PC-9 (cell line): ENCODE measurements at regions of chr15 and their contacts with region 1.

Region 1: DNA sequence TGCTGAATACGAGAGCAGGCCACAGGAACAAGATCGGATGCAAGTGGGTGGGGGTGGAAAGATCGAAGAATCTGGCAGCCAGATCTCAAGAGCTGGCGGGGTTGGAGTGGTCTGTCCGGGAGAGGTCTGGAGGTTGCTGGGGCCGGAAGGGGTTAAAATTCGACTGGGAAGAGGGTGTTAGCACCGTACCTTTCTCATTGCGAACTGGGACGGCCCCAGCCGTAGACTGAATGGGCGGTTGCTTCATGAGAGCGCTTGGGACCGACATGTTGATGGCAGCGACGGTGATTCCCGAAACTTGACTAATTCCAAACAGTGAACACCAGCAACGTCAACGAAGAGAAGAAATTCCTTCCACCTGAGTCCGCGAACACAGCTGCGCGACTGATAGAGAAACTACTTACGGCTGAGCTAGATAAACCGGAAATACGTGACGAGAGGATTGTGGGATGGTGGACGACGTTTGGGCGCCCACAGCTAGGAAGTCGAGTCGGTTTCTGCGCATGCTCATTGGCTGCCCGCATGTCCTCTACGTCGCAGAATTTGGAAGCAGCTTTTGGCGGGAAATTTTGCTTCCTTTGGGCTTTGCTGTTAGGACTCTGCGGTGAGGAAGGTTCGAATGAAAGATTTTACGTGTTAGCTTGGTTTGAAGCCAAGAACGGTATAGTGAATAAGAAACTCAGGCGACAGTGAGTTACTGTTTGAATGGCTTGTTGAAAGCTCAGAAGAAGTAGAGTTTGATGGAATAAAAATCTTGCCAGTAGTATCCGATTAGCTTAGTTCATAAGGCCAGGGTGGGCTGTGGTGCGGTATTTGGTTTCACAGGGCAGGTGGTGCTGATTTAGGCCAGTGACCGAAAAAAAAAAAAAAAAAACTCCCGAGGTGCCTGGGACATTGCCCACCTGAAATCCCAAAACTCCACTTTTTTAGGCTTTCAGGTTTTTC is at the start of gene MFAP1:
- DNase-seq: peak; percentile 86 to 92
- H3K4me3 ChIP-seq: peak within 1 kb of the TSS; percentile 63
- H3K27ac ChIP-seq: peak within 1 kb of the TSS; percentile 72
- H3K4me1 ChIP-seq: peaks cover 28% of the 10 kb centered on the region
- H3K27me3 ChIP-seq: no peaks in the 10 kb centered on the region
- CTCF ChIP-seq: no peak
- total RNA-seq, gene MFAP1: 22.3 and 26.3 TPM in 2 replicates

Region 2: GRCh38 chr15:43370975-43371974 is 453.3 kb before region 1 on chr15 and contains the starts of genes TUBGCP4 and ZSCAN29:
- CTCF ChIA-PET with region 1: no interaction called
- POLR2A ChIA-PET with region 1: interaction called, 16 read pairs
- intact Hi-C with region 1: no loop called
- DNase-seq: peak; percentile 58 to 83
- H3K4me3 ChIP-seq: peak within 1 kb of the TSS; percentile 59
- H3K27ac ChIP-seq: peak within 1 kb of the TSS; percentile 19; the same call in 1 of the 2 replicates
- H3K4me1 ChIP-seq: peaks cover 20% of the 10 kb centered on the region
- H3K27me3 ChIP-seq: no peaks in the 10 kb centered on the region
- CTCF ChIP-seq: peak; percentile 55; the same call in 1 of the 2 replicates
- total RNA-seq, gene TUBGCP4: 25.3 and 30.8 TPM in 2 replicates
- total RNA-seq, gene ZSCAN29: 36.3 and 37.9 TPM in 2 replicates

Region 3: DNA sequence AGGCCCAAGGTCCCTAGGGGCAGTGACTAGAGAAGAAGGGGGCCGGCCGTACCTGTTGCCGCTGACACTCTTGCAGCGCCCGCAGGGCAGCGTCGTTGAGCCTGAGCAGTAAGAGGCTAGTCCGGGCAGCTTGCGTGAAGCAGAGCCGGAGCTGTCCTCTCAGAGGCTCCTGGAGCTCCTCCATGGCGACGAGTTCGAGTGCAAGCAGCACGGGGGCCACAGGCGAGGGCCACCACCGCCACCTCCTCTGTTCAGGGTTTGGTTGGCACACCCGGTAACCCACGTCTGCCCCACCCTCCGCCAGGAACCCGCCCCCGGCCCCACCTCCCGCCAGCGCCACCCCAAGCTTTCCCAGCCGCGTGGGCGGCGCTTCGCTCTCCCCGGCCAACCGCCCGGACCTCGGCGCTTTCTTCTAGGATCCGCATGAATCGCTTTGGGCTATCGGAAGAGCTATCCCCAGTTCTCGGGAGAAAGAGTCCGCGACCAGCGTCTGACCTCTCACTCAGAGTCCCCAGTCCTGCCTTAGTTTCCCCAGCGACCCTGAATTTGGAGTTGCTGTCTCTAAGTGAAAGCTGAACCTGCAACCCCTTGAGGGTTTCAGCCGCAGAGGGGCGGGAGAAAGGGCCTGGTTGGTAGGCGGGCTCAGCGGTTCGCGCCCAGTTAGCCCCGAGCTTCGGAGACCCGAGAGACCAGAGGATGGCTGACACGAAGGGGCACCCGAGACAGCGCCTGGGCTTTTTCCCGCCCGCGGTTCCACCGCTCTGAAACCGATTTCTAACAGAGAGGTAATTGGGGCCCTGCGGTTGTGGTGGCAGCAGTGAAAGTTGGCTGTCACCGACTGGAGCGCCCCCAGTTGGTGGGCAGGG is 47.6 kb before region 1 on chr15 and contains the start of gene ELL3:
- CTCF ChIA-PET with region 1: no interaction called
- POLR2A ChIA-PET with region 1: interaction called, 3 read pairs
- intact Hi-C with region 1: loop called (anchors 10 kb)
- DNase-seq: peak; percentile 57 to 77
- H3K4me3 ChIP-seq: peak within 1 kb of the TSS; percentile 86
- H3K27ac ChIP-seq: peak within 1 kb of the TSS; percentile 45; the same call in 1 of the 2 replicates
- H3K4me1 ChIP-seq: no peaks in the 10 kb centered on the region
- H3K27me3 ChIP-seq: no peaks in the 10 kb centered on the region
- CTCF ChIP-seq: peak; percentile 77
- total RNA-seq, gene ELL3: 6.1 and 7.0 TPM in 2 replicates

Region 4: DNA sequence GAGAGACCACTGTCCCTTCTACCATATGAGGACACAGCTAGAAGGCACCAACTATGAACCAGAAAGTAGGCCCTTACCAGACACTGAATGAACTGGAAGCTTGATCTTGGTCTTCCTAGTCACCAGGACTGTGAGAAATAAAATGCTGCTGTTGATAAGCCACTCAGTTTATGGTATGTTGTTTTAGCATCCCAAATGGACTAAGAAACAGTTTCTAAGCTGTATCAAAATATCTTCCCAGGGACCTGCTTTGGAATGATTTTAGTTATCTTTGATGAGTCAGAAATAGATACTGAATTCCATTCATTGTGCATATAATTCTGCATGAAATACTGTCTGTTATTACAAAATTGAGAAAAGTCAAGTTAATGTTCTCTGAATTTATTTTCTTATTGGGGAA is 20.8 kb after region 1 on chr15:
- CTCF ChIA-PET with region 1: no interaction called
- POLR2A ChIA-PET with region 1: interaction called, 26 read pairs
- intact Hi-C with region 1: no loop called
- DNase-seq: no peak
- H3K4me3 ChIP-seq: no peak overlapping the region
- H3K27ac ChIP-seq: no peak overlapping the region
- H3K4me1 ChIP-seq: no peaks in the 10 kb centered on the region
- H3K27me3 ChIP-seq: no peaks in the 10 kb centered on the region
- CTCF ChIP-seq: no peak